MCF 10A (cell line): ENCODE measurements at regions of chr20 and their contacts with region 1.

Region 1: DNA sequence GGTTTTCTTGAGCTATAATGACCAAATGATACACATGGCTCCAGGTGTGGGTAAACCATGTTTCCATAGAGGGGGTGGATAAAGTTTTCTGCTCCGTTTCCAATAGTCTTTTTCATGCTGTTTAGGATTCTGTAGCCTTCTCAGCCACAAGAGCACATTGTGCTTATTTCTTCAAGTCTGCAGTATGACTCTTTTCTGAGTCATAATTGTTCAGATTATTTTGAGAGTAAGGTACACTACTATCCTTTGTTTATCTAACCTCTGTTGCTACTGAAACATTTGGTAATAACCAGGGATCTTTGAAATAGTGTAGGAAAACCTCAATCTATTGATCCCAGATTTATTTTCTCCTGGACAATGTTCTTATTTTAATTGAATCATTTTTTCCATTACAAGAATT is 247.9 kb upstream of the BMP2 start:
- DNase-seq: peak; percentile 72
- H3K4me3 Mint-ChIP-seq: no peak overlapping the region
- H3K27ac Mint-ChIP-seq: peak overlapping the region; percentile 90
- H3K4me1 Mint-ChIP-seq: peaks cover 12% of the 10 kb centered on the region
- H3K27me3 Mint-ChIP-seq: no peaks in the 10 kb centered on the region
- CTCF ChIP-seq: no peak

Region 2: GRCh38 chr20:6501061-6501460 is 18.5 kb before region 1 on chr20:
- CTCF ChIA-PET with region 1: interaction called, 10 read pairs
- POLR2A ChIA-PET with region 1: interaction called, 4 read pairs
- intact Hi-C with region 1: no loop called
- DNase-seq: peak; percentile 97
- H3K4me3 Mint-ChIP-seq: no peak overlapping the region
- H3K27ac Mint-ChIP-seq: peak overlapping the region; percentile 61
- H3K4me1 Mint-ChIP-seq: peaks cover 17% of the 10 kb centered on the region
- H3K27me3 Mint-ChIP-seq: no peaks in the 10 kb centered on the region
- CTCF ChIP-seq: no peak

Region 3: GRCh38 chr20:6566821-6567220 is 47.3 kb after region 1 on chr20:
- CTCF ChIA-PET with region 1: no interaction called
- POLR2A ChIA-PET with region 1: interaction called, 3 read pairs
- intact Hi-C with region 1: loop called (anchors 1 kb)
- DNase-seq: peak; percentile 94
- H3K4me3 Mint-ChIP-seq: no peak overlapping the region
- H3K27ac Mint-ChIP-seq: no peak overlapping the region
- H3K4me1 Mint-ChIP-seq: peaks cover 18% of the 10 kb centered on the region
- H3K27me3 Mint-ChIP-seq: no peaks in the 10 kb centered on the region
- CTCF ChIP-seq: no peak